Adrenal gland (tissue), 19 donors: ENCODE measurements at regions of chr14 and their contacts with region 1.

Region 1: DNA sequence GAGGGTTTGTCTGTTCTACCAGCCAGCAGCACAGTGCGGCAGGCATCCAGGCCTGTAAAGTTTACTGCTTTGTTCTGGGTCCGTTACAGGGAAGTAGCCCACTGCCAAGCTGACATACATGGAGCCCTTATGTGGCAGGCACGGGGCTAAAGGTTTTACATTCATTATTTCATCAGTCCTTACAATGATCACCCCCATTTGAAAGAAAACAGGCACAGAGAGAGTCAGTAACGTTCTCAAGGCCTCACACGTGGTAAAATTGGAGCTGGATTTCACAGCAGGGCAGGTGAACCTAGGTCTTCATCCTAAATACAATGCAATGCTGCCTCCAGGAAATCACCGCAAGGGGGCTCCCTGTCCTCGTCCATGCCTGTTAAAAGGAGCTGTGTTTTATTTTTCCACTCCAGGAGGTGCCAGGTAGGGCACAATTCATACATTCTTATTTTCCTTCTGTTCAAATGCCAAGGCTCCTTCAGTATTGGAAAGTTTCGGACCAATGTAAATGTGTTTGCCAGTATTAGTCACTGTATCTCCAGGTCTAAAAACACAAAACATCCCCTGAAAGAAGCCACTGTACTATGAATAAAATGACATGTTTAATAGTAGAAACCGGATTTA is 172.2 kb upstream of the GZMB start:
- DNase-seq: peak; percentile 61 to 83 (median 73)
- H3K4me3 ChIP-seq: no peak overlapping the region
- H3K27ac ChIP-seq: no peak overlapping the region
- H3K4me1 ChIP-seq: no peaks in the 10 kb centered on the region
- H3K27me3 ChIP-seq: no peaks in the 10 kb centered on the region
- CTCF ChIP-seq: peak; percentile 64 to 83 (median 77)
- POLR2A ChIP-seq: no peak

Region 2: GRCh38 chr14:24556756-24557155 is 249.4 kb before region 1 on chr14:
- intact Hi-C with region 1: no loop called
- DNase-seq: no peak
- H3K4me3 ChIP-seq: no peak overlapping the region
- H3K27ac ChIP-seq: no peak overlapping the region
- H3K4me1 ChIP-seq: no peaks in the 10 kb centered on the region
- H3K27me3 ChIP-seq: no peaks in the 10 kb centered on the region
- CTCF ChIP-seq: no peak
- POLR2A ChIP-seq: no peak

Region 3: DNA sequence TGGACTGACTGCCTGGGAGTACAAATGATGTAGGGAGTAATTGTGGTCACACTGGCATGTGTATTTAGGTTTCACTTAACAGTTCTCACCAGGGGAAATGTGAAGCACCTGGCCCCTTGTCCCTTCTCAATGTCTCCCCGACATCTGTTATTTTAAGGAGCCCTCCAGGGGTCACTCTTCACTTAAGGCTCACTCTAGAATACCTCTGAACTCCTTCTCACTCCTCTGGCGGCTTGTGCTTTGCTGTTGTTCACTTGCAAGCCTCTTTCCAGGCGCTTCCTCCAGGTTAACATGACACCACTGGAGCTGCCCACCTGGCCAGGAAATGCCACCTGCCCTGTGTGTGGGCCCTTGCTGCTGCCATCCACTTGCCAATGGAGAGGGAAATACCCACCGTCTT is 115.7 kb before region 1 on chr14:
- intact Hi-C with region 1: no loop called
- DNase-seq: no peak
- H3K4me3 ChIP-seq: no peak overlapping the region
- H3K27ac ChIP-seq: no peak overlapping the region
- H3K4me1 ChIP-seq: no peaks in the 10 kb centered on the region
- H3K27me3 ChIP-seq: no peaks in the 10 kb centered on the region
- CTCF ChIP-seq: no peak
- POLR2A ChIP-seq: no peak

Region 4: DNA sequence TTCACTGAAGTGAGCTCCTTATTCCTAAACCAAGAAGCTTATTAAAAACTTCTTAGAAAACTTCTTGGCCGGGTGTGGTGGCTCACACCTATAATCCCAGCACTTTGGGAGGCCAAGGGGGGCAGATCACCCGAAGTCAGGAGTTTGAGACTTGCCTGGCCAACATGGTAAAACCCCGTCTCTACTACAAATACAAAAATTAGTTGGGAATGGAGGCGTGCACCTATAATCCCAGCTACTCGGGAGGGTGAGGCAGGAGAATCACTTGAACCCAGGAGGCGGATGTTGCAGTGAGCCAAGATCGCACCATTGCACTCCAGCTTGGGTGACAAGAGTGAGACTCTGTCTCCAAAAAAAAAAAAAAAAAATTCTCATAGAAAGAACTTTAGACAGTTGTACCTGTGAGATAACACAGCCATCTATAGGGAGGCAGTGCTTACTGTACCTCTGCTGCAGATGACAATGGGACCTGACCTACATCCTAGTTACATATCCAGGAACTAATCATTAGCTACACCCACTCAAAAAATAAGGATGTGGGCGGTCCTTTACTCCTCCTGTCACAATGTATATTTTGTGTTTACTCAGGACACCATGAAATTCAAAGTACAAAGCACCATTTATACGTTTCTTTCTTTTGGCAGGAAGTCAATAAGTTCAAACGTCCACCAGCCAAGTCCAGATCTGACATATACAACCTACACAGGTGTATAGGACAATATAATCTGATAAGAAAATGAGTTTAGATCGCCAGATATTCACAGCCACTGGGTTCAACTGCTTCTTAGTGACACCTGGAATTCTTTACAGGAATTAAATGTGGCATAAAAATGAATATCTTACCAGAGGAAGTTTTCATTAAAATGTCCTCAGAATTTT is 228.9 kb after region 1 on chr14:
- intact Hi-C with region 1: loop called in 1 of 2 experiments (anchors 5 kb)
- DNase-seq: no peak
- H3K4me3 ChIP-seq: no peak overlapping the region
- H3K27ac ChIP-seq: no peak overlapping the region
- H3K4me1 ChIP-seq: no peaks in the 10 kb centered on the region
- H3K27me3 ChIP-seq: no peaks in the 10 kb centered on the region
- CTCF ChIP-seq: no peak
- POLR2A ChIP-seq: no peak

Region 5: DNA sequence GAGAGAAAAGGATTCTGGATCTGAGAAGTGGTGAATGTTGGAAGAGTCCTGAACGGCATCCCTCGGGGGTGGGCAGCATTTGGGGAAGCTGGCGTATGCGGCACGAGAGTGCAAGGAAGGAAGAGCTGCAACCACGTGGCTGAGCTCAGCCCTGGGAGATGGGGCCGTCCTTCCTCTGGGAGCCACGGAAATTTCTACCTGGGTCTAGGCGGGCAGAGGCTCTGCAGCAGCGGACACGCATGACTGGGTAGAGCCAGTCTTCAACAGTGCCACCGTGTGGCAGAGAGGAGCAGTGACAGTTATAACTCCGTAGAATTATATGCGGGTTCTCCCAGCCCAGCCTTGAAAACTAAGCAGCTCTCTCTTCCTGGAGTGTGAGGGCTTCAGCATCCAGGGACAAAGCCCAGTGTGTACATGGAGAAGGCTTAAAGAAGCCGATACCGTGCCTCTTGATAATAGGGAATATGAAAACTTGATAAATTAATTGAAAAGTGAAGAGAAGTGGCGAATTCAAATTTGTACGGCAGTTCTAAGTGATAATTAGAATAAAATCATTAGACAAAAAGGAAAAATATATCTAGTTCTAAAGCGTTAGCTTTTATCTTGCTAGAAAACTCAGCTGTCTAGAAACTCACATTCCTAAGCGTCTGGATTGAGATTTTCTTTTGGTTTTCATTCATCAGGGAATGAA is 326.7 kb after region 1 on chr14:
- intact Hi-C with region 1: loop called (anchors 5 to 10 kb)
- DNase-seq: peak; percentile 28 to 72 (median 64)
- H3K4me3 ChIP-seq: no peak overlapping the region
- H3K27ac ChIP-seq: no peak overlapping the region
- H3K4me1 ChIP-seq: no peaks in the 10 kb centered on the region
- H3K27me3 ChIP-seq: peaks cover 9% of the 10 kb centered on the region
- CTCF ChIP-seq: peak; percentile 55 to 82 (median 72)
- POLR2A ChIP-seq: no peak